MCF 10A (cell line): ENCODE measurements at regions of chr19 and their contacts with region 1.

Region 1: GRCh38 chr19:13093407-13094105 is 9.1 kb downstream of the LYL1 start:
- DNase-seq: peak; percentile 86
- H3K4me3 Mint-ChIP-seq: no peak overlapping the region
- H3K27ac Mint-ChIP-seq: no peak overlapping the region
- H3K4me1 Mint-ChIP-seq: peaks cover 5% of the 10 kb centered on the region
- H3K27me3 Mint-ChIP-seq: no peaks in the 10 kb centered on the region
- CTCF ChIP-seq: peak; percentile 95

Region 2: GRCh38 chr19:12669270-12670158 is 424.0 kb before region 1 on chr19:
- CTCF ChIA-PET with region 1: no interaction called
- POLR2A ChIA-PET with region 1: no interaction called
- intact Hi-C with region 1: no loop called
- DNase-seq: peak; percentile 83
- H3K4me3 Mint-ChIP-seq: peak overlapping the region; percentile 92
- H3K27ac Mint-ChIP-seq: peak overlapping the region; percentile 100
- H3K4me1 Mint-ChIP-seq: peaks cover 7% of the 10 kb centered on the region
- H3K27me3 Mint-ChIP-seq: no peaks in the 10 kb centered on the region
- CTCF ChIP-seq: no peak

Region 3: DNA sequence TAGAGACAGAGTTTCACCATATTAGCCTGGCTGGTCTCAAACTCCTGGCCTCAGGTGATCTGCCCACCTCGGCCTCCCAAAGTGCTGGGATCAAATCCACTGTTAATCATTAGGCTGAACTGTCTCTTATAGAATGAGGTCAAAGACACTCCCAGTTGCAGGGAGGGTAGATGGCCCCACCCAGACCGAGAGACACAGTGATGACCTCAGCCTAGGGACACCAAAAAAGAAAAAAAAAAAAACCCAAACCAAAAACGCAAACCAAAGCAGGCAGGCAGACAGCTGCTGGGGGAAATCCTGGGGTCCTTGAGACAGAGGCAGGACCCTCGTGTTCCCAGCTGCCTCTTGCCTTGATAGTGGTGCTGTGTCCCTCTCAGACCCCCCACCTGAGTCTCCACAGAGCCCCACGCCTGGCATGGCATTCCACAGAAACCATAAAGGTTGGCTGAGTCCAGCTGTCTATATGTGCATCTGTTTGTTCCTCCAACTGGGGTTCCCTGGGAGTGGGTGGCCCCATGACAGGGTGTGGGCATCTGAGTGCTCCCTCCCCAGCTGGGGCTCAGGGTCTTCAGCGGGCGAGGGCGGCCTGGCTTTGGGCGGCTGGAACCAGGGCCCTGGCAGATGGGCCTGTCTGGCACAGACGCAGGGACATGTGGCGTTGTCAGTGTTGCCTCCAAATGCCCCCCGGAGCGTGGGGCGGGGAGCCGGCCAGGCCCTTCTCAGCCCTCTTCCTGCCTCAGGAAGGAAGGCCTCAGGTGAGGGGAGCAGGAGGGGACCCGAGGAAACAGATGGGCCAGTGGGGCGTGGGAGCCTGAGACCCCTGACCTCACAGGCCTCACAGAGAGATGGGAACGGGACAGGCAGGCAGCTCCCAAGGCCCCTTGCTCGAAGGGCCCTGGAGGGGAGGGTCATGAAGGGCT is 119.0 kb before region 1 on chr19:
- CTCF ChIA-PET with region 1: interaction called, 97 read pairs
- POLR2A ChIA-PET with region 1: interaction called, 3 read pairs
- intact Hi-C with region 1: loop called (anchors 1 kb)
- DNase-seq: no peak
- H3K4me3 Mint-ChIP-seq: no peak overlapping the region
- H3K27ac Mint-ChIP-seq: no peak overlapping the region
- H3K4me1 Mint-ChIP-seq: peaks cover 6% of the 10 kb centered on the region
- H3K27me3 Mint-ChIP-seq: no peaks in the 10 kb centered on the region
- CTCF ChIP-seq: no peak

Region 4: DNA sequence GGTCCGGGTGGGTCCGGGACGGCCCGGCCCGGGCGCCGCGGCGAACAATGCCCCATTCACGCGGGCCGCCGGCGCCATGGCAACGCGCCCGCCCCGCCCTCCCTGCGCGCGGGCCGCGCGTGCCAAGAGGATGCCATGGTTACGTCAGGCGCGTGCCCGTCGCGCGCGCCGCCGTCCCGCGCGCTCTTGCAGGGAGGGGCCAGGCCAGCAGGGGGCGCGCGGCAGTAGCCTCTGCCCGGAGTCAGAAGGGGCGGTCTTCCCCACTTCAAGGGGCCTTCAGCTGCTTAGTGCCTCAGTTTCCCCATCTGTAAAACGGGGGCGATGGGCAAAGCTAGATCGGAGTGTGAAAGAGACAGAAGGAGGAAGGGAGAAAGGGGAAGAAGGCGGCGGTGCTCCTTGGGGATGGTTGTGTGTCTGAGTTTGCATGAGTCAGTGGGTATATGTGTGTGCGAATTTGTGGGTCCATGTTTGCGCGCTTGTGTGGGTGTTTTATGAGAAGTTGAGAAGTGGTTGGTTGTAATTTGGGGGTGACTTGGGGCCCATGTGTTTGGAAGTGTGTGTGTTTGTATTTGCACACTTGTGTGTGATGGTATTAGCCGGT is 109.9 kb before region 1 on chr19:
- CTCF ChIA-PET with region 1: interaction called, 97 read pairs
- POLR2A ChIA-PET with region 1: interaction called, 4 read pairs
- intact Hi-C with region 1: loop called (anchors 1 kb)
- DNase-seq: peak; percentile 74
- H3K4me3 Mint-ChIP-seq: no peak overlapping the region
- H3K27ac Mint-ChIP-seq: no peak overlapping the region
- H3K4me1 Mint-ChIP-seq: peaks cover 6% of the 10 kb centered on the region
- H3K27me3 Mint-ChIP-seq: no peaks in the 10 kb centered on the region
- CTCF ChIP-seq: peak; percentile 94

Region 5: GRCh38 chr19:13079542-13079986 is 14.0 kb before region 1 on chr19:
- CTCF ChIA-PET with region 1: interaction called, 15 read pairs
- POLR2A ChIA-PET with region 1: no interaction called
- intact Hi-C with region 1: no loop called
- DNase-seq: no peak
- H3K4me3 Mint-ChIP-seq: no peak overlapping the region
- H3K27ac Mint-ChIP-seq: no peak overlapping the region
- H3K4me1 Mint-ChIP-seq: peaks cover 9% of the 10 kb centered on the region
- H3K27me3 Mint-ChIP-seq: no peaks in the 10 kb centered on the region
- CTCF ChIP-seq: no peak